ENCODE measurements at regions of chr12 and their contacts with region 1.

Region 1: DNA sequence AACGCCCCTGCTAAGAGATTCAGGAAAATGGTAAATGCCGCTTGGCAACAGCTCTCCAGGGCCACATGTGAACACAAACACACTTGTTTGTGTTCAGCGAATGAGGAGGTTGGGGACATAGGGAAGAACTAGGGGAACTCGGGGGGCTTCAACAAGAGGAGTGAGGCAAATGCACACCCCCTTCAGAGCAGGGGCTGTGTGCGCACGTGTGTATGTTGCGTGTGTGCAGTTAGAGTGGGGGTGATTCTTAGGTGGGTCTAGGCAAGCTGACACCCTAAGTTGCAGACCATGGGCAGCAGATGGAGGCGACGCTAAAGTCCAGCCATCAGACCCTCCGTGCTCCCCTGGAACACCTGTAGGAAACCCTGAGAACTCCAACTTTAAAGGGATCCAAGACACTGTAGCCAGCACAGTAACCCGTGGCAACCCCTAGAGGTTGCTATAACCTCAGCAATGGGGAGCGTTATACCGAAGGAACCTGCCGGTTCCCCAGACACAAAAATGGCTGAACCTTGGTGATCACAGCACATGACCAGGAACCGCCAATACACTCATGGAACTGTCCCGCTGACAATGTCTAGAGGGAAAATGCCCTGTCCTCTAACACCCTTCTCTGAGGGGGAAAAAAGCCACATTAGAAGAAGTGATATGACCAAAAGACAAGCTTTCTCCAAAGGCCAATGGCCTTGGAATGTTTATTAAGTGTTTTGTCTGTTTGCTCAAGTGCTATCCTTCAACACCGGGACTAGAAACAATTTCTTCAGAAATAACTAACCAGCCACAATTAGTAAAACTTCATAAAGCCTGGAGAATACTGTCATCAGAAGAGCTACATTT is 86.5 kb upstream of the CEP83 start:
- DNase-seq: peak; percentile 51 to 71
- H3K4me3 ChIP-seq: no peak overlapping the region
- H3K4me1 ChIP-seq: no peaks in the 10 kb centered on the region
- H3K27me3 ChIP-seq: no peaks in the 10 kb centered on the region

Region 2: DNA sequence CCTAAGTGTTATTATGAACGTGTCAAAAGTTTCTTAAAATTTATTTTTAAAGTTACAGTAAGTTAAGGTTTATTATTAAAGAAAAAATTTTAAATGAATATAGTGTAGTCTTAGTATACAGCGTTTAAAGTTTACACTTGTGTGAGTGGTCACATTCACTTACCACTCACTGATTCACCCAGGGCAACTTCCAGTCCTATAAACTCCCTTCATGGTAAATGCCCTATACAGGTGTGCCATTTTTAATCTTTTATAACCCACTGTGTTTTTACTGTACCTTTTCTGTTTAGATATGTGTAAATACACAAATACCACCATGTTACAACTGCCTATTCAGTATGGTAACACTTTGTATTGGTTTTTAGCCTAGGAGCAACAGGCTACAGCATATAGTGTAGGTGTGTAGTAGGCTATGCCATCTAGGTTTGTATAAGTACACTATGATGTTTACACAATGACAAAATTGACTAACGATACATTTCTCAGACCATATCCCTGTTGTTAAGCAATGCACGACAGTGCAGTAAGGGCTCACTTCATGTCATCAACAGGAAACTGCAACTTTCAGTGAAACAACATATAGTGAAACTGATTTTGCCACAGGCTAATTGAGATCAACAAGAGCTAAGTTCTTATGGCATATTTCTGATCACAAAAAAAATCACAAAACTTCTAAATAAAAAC is 216.2 kb after region 1 on chr12:
- in situ Hi-C with region 1: loop called (anchors 5 kb)
- DNase-seq: no peak
- H3K4me3 ChIP-seq: no peak overlapping the region
- H3K4me1 ChIP-seq: peaks cover 4% of the 10 kb centered on the region; the same call in 1 of the 2 replicates
- H3K27me3 ChIP-seq: no peaks in the 10 kb centered on the region

Region 3: GRCh38 chr12:94875525-94875924 is 329.4 kb after region 1 on chr12:
- in situ Hi-C with region 1: loop called (anchors 10 kb)
- DNase-seq: peak; percentile 61 to 71
- H3K4me3 ChIP-seq: no peak overlapping the region
- H3K4me1 ChIP-seq: peaks cover 14% of the 10 kb centered on the region
- H3K27me3 ChIP-seq: no peaks in the 10 kb centered on the region

Measured in HAP-1 (cell line).